ENCODE measurements at regions of chr1 and their contacts with region 1.

Region 1: GRCh38 chr1:222455188-222455879 is 92.6 kb downstream of the HHIPL2 start:
- DNase-seq: peak; percentile 86 to 91 (median 86)
- ATAC-seq: peak; percentile 98
- H3K4me3 ChIP-seq: no peak overlapping the region
- H3K27ac ChIP-seq: peak overlapping the region; percentile 21; the same call in 1 of the 3 replicates
- H3K4me1 ChIP-seq: peaks cover 0 to 6% of the 10 kb centered on the region in 2 experiments; a peak in 3 of 5 replicates
- H3K27me3 ChIP-seq: peaks cover 0 to 6% of the 10 kb centered on the region in 2 experiments; a peak in 1 of 5 replicates
- CTCF ChIP-seq: peak; percentile 93 to 98 (median 96)
- EP300 ChIP-seq: peak; percentile 84
- POLR2A ChIP-seq: no peak
- RAD21 ChIP-seq: peak; percentile 95 to 99

Region 2: GRCh38 chr1:220873868-220874655 is 1581.3 kb before region 1 on chr1:
- CTCF ChIA-PET with region 1: interaction called, 3 read pairs
- POLR2A ChIA-PET with region 1: no interaction called
- in situ Hi-C with region 1: loop called (anchors 10 kb)
- intact Hi-C with region 1: loop called (anchors 2 kb)
- DNase-seq: peak; percentile 44 to 58 (median 54)
- ATAC-seq: peak; percentile 72
- H3K4me3 ChIP-seq: no peak overlapping the region
- H3K27ac ChIP-seq: no peak overlapping the region
- H3K4me1 ChIP-seq: peaks cover 0 to 9% of the 10 kb centered on the region in 2 experiments; a peak in 1 of 5 replicates
- H3K27me3 ChIP-seq: peaks cover 5 to 14% of the 10 kb centered on the region in 2 experiments; a peak in 2 of 5 replicates
- CTCF ChIP-seq: peak; percentile 65 to 75 (median 71)
- EP300 ChIP-seq: no peak
- POLR2A ChIP-seq: no peak
- RAD21 ChIP-seq: peak; percentile 83 to 87

Region 3: GRCh38 chr1:221263831-221264767 is 1191.2 kb before region 1 on chr1:
- CTCF ChIA-PET with region 1: no interaction called
- POLR2A ChIA-PET with region 1: no interaction called
- in situ Hi-C with region 1: no loop called
- intact Hi-C with region 1: loop called (anchors 10 kb)
- DNase-seq: peak; percentile 47 to 63 (median 50)
- ATAC-seq: peak; percentile 81
- H3K4me3 ChIP-seq: no peak overlapping the region
- H3K27ac ChIP-seq: no peak overlapping the region
- H3K4me1 ChIP-seq: no peaks in the 10 kb centered on the region
- H3K27me3 ChIP-seq: no peaks in the 10 kb centered on the region
- CTCF ChIP-seq: peak; percentile 43 to 48 (median 47); a peak in 5 of 6 replicates
- EP300 ChIP-seq: no peak
- POLR2A ChIP-seq: no peak
- RAD21 ChIP-seq: peak; percentile 56 to 62

Region 4: GRCh38 chr1:222009105-222009730 is 446.1 kb before region 1 on chr1:
- CTCF ChIA-PET with region 1: no interaction called
- POLR2A ChIA-PET with region 1: no interaction called
- in situ Hi-C with region 1: no loop called
- intact Hi-C with region 1: loop called (anchors 10 kb)
- DNase-seq: peak; percentile 23 to 61 (median 30)
- ATAC-seq: peak; percentile 95
- H3K4me3 ChIP-seq: no peak overlapping the region
- H3K27ac ChIP-seq: no peak overlapping the region
- H3K4me1 ChIP-seq: no peaks in the 10 kb centered on the region
- H3K27me3 ChIP-seq: no peaks in the 10 kb centered on the region
- CTCF ChIP-seq: peak; percentile 38 to 61 (median 46); a peak in 4 of 6 replicates
- EP300 ChIP-seq: no peak
- POLR2A ChIP-seq: no peak
- RAD21 ChIP-seq: peak; percentile 73 to 86

Region 5: GRCh38 chr1:222124602-222125001 is 330.7 kb before region 1 on chr1:
- CTCF ChIA-PET with region 1: no interaction called
- POLR2A ChIA-PET with region 1: no interaction called
- in situ Hi-C with region 1: no loop called
- intact Hi-C with region 1: loop called (anchors 10 kb)
- DNase-seq: peak in 1 of 4 experiments; percentile 4
- ATAC-seq: peak; percentile 56; the same call in 2 of the 3 replicates
- H3K4me3 ChIP-seq: no peak overlapping the region
- H3K27ac ChIP-seq: no peak overlapping the region
- H3K4me1 ChIP-seq: no peaks in the 10 kb centered on the region
- H3K27me3 ChIP-seq: no peaks in the 10 kb centered on the region
- CTCF ChIP-seq: peak in 2 of 3 experiments; percentile 15 to 37; a peak in 2 of 6 replicates
- EP300 ChIP-seq: no peak
- POLR2A ChIP-seq: no peak
- RAD21 ChIP-seq: peak; percentile 28 to 58